PC-9 (cell line): ENCODE measurements at regions of chr2 and their contacts with region 1.

Region 1: DNA sequence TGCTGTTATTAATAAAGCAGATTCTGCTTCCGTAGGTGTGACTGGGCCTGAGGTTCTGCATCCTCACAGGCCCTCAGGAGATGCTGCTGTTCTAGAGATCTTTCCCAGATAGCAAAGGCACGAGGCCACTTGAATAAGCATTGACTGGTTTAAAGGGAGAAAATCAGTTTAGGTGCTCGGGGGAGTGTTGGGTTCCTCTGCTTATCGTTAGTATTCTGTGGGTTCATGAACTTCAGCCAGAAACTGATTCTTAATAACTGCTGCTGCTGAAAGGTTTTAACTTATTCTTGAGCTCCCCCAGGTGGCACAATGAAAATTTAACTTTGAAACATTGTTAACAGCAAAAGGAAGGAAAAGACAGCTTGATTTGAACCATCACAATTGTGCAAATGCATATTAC is 56.9 kb downstream of the ITGA6 start:
- DNase-seq: no peak
- H3K4me3 ChIP-seq: no peak overlapping the region
- H3K27ac ChIP-seq: no peak overlapping the region
- H3K4me1 ChIP-seq: 0 out of 2 replicates have a peak, but pooled peaks cover 5% of the 10 kb centered on the region
- H3K27me3 ChIP-seq: no peaks in the 10 kb centered on the region
- CTCF ChIP-seq: peak; percentile 89

Region 2: DNA sequence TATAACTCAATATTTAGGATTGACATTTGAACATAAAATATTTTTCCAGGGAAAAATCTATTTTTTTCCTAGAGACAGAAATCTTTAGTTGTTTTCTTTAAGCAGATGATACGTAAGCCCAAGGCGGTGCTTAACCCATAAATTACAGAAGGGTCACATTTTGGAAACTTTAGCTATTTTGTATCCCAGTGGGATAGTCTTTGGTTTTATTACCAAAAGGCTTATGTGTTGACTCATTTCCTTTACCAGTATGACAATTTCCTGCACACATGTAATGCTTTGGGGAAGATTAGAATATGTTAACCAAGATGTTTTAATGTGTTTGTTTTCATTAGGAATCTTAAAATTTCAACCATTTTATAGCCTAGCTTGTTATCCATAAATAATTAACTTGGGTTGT is 772.2 kb before region 1 on chr2:
- CTCF ChIA-PET with region 1: no interaction called
- POLR2A ChIA-PET with region 1: interaction called, 3 read pairs
- intact Hi-C with region 1: loop called (anchors 5 kb)
- DNase-seq: no peak
- H3K4me3 ChIP-seq: no peak overlapping the region
- H3K27ac ChIP-seq: peak overlapping the region; percentile 2; the same call in 1 of the 2 replicates
- H3K4me1 ChIP-seq: no peaks in the 10 kb centered on the region; the same call in 1 of the 2 replicates
- H3K27me3 ChIP-seq: no peaks in the 10 kb centered on the region
- CTCF ChIP-seq: no peak

Region 3: GRCh38 chr2:172442072-172442895 is 42.0 kb before region 1 on chr2:
- CTCF ChIA-PET with region 1: interaction called, 13 read pairs
- POLR2A ChIA-PET with region 1: no interaction called
- intact Hi-C with region 1: no loop called
- DNase-seq: peak; percentile 100
- H3K4me3 ChIP-seq: peak overlapping the region; percentile 5; the same call in 1 of the 2 replicates
- H3K27ac ChIP-seq: peak overlapping the region; percentile 81
- H3K4me1 ChIP-seq: peaks cover 80% of the 10 kb centered on the region
- H3K27me3 ChIP-seq: no peaks in the 10 kb centered on the region
- CTCF ChIP-seq: no peak

Region 4: GRCh38 chr2:172829229-172829628 is 345.0 kb after region 1 on chr2:
- CTCF ChIA-PET with region 1: no interaction called
- POLR2A ChIA-PET with region 1: no interaction called
- intact Hi-C with region 1: no loop called
- DNase-seq: peak; percentile 75 to 83
- H3K4me3 ChIP-seq: no peak overlapping the region
- H3K27ac ChIP-seq: no peak overlapping the region
- H3K4me1 ChIP-seq: no peaks in the 10 kb centered on the region
- H3K27me3 ChIP-seq: no peaks in the 10 kb centered on the region
- CTCF ChIP-seq: no peak

Region 5: DNA sequence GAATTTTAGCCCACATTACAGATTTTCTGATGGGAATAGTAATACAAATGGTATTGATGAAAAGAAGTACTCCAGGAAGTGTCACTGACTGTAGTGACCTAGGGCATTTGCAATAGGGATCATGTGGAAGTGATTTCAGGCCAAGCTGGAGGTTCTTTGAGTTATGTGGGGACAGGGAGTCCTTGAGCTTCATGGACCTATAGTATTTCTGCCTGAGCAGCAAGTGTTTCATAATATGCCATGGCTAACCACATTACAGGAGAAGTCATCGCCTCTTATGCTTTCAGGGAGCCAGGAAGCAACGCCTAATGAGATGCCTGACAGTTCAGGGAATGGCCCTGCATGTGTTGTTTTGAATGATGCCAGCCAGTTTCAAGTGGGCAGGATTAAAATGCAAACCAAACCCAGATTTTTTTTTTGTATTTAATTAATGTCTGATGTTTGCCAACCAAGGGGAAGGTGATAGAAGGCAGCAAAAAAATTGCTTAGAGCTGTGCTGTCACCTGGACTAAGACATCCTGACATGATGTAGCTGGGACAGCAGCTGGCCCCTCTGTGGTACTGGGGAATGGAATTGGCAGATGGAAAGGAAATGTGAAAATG is 360.9 kb after region 1 on chr2:
- CTCF ChIA-PET with region 1: no interaction called
- POLR2A ChIA-PET with region 1: no interaction called
- intact Hi-C with region 1: no loop called
- DNase-seq: no peak
- H3K4me3 ChIP-seq: no peak overlapping the region
- H3K27ac ChIP-seq: no peak overlapping the region
- H3K4me1 ChIP-seq: peaks cover 3% of the 10 kb centered on the region
- H3K27me3 ChIP-seq: no peaks in the 10 kb centered on the region
- CTCF ChIP-seq: no peak

Region 6: DNA sequence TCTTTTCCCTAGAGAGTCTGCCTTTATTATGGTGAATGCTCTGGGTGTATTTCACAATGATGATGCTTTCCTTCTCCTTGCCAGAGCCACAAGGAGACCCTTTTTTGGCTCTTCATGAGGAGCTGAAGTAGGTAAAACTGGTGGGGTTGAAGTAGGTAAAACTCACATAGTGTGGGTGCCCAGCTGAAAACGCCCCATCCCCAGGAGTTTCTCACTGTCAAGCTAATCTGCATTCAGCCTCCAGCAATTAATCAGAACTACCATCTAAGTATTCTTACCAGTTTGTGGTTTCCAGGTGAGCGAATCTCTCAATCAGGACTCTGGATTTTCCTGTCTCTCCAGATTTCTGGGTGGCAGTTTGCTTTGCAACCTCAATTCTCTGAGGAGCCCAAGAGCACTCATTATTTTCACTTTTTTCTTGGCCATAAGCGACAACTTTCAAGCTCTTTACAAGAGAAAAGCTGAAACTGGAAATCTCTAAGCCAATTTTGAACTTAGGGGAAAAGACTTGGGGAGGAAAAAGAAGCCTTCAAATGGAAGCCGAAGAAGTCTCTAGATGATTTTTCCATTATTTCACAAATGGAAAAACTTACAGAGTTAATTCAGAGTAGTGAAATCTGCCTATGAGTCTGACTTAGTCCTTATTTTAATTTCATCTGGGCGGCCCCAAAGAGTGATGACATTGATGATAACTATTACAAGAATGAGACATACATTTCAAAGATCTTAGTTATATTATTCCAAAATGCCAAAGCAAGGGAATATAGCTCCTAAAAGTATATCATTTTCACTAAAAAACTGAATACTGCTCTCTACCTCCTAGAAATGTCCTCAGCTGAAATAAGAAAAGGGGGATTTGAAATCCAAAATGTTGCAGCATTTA is 470.0 kb after region 1 on chr2:
- CTCF ChIA-PET with region 1: no interaction called
- POLR2A ChIA-PET with region 1: no interaction called
- intact Hi-C with region 1: no loop called
- DNase-seq: peak; percentile 80 to 99
- H3K4me3 ChIP-seq: peak overlapping the region; percentile 36; the same call in 1 of the 2 replicates
- H3K27ac ChIP-seq: peak overlapping the region; percentile 85
- H3K4me1 ChIP-seq: peaks cover 44% of the 10 kb centered on the region
- H3K27me3 ChIP-seq: no peaks in the 10 kb centered on the region
- CTCF ChIP-seq: no peak